ENCODE measurements at regions of chr11 and their contacts with region 1.

Region 1: GRCh38 chr11:72091005-72091691 is 10.5 kb downstream of the LRRC51 start:
- DNase-seq: peak; percentile 72
- ATAC-seq: peak; percentile 93 to 96
- H3K4me3 ChIP-seq: no peak overlapping the region
- H3K27ac ChIP-seq: peak overlapping the region; percentile 31
- H3K4me1 ChIP-seq: peaks cover 15% of the 10 kb centered on the region
- H3K27me3 ChIP-seq: no peaks in the 10 kb centered on the region
- CTCF ChIP-seq: peak; percentile 89

Region 2: GRCh38 chr11:72026090-72026489 is 65.1 kb before region 1 on chr11:
- intact Hi-C with region 1: loop called (anchors 5 kb)
- DNase-seq: no peak
- ATAC-seq: no peak
- H3K4me3 ChIP-seq: no peak overlapping the region
- H3K27ac ChIP-seq: no peak overlapping the region
- H3K4me1 ChIP-seq: peaks cover 46% of the 10 kb centered on the region
- H3K27me3 ChIP-seq: no peaks in the 10 kb centered on the region
- CTCF ChIP-seq: no peak

Measured in lower lobe of right lung (tissue), 2 donors.